Activated B cell treated with CpG ODN at 0.5 μM for 24 hours (primary cell): ENCODE measurements at regions of chr16 and their contacts with region 1.

Region 1: GRCh38 chr16:4425378-4426020 is at the start of gene DNAJA3:
- DNase-seq: peak; percentile 93
- ATAC-seq: peak; percentile 90
- H3K4me3 Mint-ChIP-seq: peak within 1 kb of the TSS; percentile 97
- H3K27ac Mint-ChIP-seq: peak within 1 kb of the TSS; percentile 100
- H3K4me1 Mint-ChIP-seq: peaks cover 31% of the 10 kb centered on the region
- H3K27me3 Mint-ChIP-seq: no peaks in the 10 kb centered on the region
- CTCF ChIP-seq: no peak
- total RNA-seq, gene DNAJA3: 55.3 and 62.6 TPM in 2 replicates

Region 2: DNA sequence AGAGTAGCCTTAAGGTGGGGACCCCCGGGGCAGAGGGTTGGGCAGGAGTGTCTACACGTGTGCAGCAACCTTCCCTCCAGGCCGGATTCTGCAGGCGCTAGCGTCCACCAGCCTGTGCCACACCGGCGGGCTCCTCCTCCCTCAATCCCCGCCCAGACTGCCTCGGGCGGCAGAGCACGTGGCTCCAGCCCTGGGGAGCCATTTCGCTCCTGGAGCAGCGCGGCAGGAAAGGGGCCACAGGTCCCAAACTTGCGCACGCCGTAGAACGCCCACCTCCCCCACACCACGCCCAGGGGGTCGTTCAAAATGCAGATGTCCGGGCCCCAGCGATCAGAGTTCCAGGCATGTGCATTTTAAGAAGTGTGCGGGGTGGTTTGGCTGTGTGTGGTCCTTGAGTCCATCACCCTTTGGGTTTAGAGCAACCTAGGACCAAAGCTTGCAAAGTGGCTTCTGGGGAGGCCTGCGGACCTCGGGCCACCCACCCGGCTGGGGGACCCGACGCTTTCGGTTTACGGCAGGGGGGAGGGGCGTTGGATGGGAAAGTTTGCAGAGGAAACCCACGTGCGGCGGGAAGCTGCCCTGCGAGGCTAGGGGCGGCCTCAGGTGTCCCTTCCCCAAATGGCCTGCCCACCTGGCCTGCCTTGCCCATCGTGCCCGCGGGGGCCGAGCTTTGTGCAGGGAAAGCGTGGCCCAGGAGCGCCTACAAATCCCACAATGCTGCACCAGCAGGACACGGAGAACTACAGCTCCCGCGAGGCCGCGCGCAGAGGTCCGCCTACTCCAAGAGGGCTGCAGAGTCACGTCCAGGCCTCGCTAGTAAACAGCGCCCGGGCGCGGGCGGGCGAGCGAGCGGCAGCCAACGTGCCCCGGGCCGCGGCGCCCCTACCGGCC is 154.1 kb before region 1 on chr16:
- CTCF ChIA-PET with region 1: no interaction called
- POLR2A ChIA-PET with region 1: no interaction called
- intact Hi-C with region 1: loop called (anchors 2 kb)
- DNase-seq: peak; percentile 82
- ATAC-seq: peak; percentile 81
- H3K4me3 Mint-ChIP-seq: peak overlapping the region; percentile 86
- H3K27ac Mint-ChIP-seq: peak overlapping the region; percentile 88
- H3K4me1 Mint-ChIP-seq: peaks cover 11% of the 10 kb centered on the region
- H3K27me3 Mint-ChIP-seq: no peaks in the 10 kb centered on the region
- CTCF ChIP-seq: no peak

Region 3: GRCh38 chr16:4358831-4359561 is 66.5 kb before region 1 on chr16:
- CTCF ChIA-PET with region 1: no interaction called
- POLR2A ChIA-PET with region 1: no interaction called
- intact Hi-C with region 1: loop called (anchors 1 kb)
- DNase-seq: peak; percentile 68
- ATAC-seq: peak; percentile 83
- H3K4me3 Mint-ChIP-seq: no peak overlapping the region
- H3K27ac Mint-ChIP-seq: no peak overlapping the region
- H3K4me1 Mint-ChIP-seq: peaks cover 13% of the 10 kb centered on the region
- H3K27me3 Mint-ChIP-seq: no peaks in the 10 kb centered on the region
- CTCF ChIP-seq: peak; percentile 56

Region 4: GRCh38 chr16:4538350-4539235 is 113.1 kb after region 1 on chr16 and contains the start of gene CDIP1:
- CTCF ChIA-PET with region 1: no interaction called
- POLR2A ChIA-PET with region 1: no interaction called
- intact Hi-C with region 1: loop called (anchors 2 kb)
- DNase-seq: peak; percentile 89
- ATAC-seq: peak; percentile 91
- H3K4me3 Mint-ChIP-seq: peak within 1 kb of the TSS; percentile 76
- H3K27ac Mint-ChIP-seq: peak within 1 kb of the TSS; percentile 73
- H3K4me1 Mint-ChIP-seq: peaks cover 15% of the 10 kb centered on the region
- H3K27me3 Mint-ChIP-seq: peaks cover 1% of the 10 kb centered on the region
- CTCF ChIP-seq: no peak
- total RNA-seq, gene CDIP1: 12.5 and 12.9 TPM in 2 replicates

Region 5: GRCh38 chr16:4544473-4544872 is 119.0 kb after region 1 on chr16:
- CTCF ChIA-PET with region 1: no interaction called
- POLR2A ChIA-PET with region 1: no interaction called
- intact Hi-C with region 1: loop called (anchors 1 kb)
- DNase-seq: no peak
- ATAC-seq: no peak
- H3K4me3 Mint-ChIP-seq: no peak overlapping the region
- H3K27ac Mint-ChIP-seq: no peak overlapping the region
- H3K4me1 Mint-ChIP-seq: peaks cover 4% of the 10 kb centered on the region
- H3K27me3 Mint-ChIP-seq: peaks cover 1% of the 10 kb centered on the region
- CTCF ChIP-seq: no peak

Region 6: DNA sequence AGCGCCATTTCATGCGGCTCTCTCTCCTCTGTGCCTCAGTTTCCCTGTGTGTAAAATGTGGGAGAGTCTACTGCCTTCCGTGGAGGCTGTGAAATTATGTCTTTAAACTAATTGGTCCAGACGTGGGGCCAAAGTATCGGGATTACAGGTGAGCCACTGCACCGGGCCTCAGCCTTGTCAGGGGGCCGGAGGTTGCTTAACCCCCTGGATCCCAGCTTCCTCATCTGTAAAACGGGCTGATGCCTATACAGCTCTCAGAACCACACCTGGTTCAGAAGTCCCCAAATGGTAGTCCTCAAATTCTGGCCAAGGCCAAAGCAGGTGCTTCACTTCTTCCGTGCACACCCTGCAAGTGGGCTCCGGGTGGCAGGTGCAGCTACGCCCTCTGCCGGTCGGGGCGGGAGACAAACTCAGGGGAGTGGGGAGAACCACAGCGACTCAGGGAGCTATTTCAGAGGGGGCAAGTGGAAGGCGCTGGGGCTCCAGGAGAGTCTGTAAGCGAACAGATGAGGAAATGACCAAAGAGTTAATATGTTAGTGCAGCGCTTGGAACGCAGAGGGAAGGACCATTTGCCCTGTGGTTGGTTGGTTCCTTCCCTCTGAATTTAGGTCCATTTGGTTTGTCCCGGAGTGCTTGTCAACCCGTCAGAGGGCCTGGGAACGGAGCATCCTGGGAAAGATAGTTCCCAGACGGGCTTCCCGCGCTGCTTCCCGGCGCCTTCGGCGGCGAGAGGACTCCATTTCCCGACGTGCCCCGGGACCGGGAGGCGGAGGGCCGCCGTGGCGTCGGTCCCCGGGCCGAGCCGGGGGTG is 198.7 kb after region 1 on chr16 and contains the start of gene MGRN1:
- CTCF ChIA-PET with region 1: no interaction called
- POLR2A ChIA-PET with region 1: no interaction called
- intact Hi-C with region 1: loop called (anchors 2 kb)
- DNase-seq: peak; percentile 86
- ATAC-seq: peak; percentile 90
- H3K4me3 Mint-ChIP-seq: peak within 1 kb of the TSS; percentile 99
- H3K27ac Mint-ChIP-seq: peak within 1 kb of the TSS; percentile 100
- H3K4me1 Mint-ChIP-seq: peaks cover 31% of the 10 kb centered on the region
- H3K27me3 Mint-ChIP-seq: no peaks in the 10 kb centered on the region
- CTCF ChIP-seq: peak; percentile 91
- total RNA-seq, gene MGRN1: 69.6 and 88.6 TPM in 2 replicates